Endothelial cell of umbilical vein (primary cell): ENCODE measurements at regions of chr10 and their contacts with region 1.

Region 1: GRCh38 chr10:110304780-110305421 is at the start of gene SMNDC1:
- DNase-seq: peak; percentile 99
- H3K4me3 ChIP-seq: peak within 1 kb of the TSS; percentile 95 to 99 (median 99)
- H3K27ac ChIP-seq: peak within 1 kb of the TSS; percentile 97
- H3K4me1 ChIP-seq: peaks cover 47% of the 10 kb centered on the region
- H3K27me3 ChIP-seq: no peaks in the 10 kb centered on the region
- CTCF ChIP-seq: no peak
- POLR2A ChIP-seq: peak; percentile 51
- total RNA-seq, gene SMNDC1: 38.5 and 39.3 TPM in 2 replicates

Region 2: DNA sequence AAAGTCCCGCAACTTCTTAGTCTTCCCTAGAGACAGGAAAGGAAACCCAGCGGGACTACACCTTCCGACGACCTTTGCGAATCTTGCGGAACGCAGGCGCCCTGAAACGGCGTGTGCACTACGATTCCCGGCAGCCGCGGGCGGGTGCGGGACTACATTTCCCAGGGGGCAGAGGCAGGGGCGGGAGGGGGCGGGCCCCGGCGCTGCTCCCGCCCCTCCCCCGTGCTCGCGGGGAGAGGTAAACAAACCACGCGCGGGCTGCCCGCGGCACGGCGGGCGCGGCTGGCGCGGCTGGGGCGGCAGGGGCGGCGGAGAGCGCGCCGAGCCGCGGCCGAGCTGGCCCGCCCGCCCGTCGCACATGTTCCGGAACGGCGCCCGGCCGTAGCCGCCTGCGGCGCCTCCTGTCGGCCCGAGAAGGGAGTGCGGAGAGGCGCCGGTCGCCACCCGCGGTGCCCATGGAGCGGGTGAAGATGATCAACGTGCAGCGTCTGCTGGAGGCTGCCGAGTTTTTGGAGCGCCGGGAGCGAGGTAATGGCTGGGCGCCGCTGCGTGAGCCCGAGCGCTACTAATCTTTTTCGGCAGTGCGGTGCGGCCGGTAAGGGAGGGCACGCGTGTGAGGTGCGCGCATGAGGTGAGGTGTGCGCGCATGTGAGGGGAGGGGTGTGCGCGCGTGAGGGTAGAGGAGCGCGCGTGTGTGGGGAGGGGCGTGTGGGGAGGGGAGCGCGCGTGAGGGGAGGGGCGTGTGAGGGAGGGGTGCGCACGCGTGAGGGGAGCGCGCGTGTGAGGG is 79.0 kb before region 1 on chr10:
- CTCF ChIA-PET with region 1: no interaction called
- POLR2A ChIA-PET with region 1: no interaction called
- dilution Hi-C with region 1: no loop called
- intact Hi-C with region 1: no loop called
- DNase-seq: peak; percentile 89
- H3K4me3 ChIP-seq: peak overlapping the region; percentile 74 to 92 (median 75)
- H3K27ac ChIP-seq: no peak overlapping the region
- H3K4me1 ChIP-seq: peaks cover 8% of the 10 kb centered on the region
- H3K27me3 ChIP-seq: no peaks in the 10 kb centered on the region
- CTCF ChIP-seq: peak; percentile 54 to 79
- POLR2A ChIP-seq: no peak

Region 3: DNA sequence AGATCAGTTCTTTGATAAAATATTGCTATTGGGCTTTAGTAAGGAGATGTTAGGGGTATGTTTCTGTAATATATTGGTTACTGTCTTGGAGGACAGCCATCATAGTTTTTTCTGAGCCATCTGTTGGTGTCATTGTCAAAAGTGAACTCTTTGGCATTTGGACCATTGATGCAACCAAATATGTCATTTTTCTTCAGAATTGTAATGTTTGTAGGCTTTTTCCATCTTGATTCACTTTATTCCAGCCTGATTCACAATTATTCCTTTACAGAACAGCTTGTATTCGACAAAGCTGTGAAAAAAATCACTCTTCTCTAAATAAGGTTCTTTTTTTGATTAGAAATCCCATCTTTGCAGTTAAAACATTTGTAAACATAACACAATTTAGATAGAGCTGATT is 37.6 kb before region 1 on chr10:
- CTCF ChIA-PET with region 1: no interaction called
- POLR2A ChIA-PET with region 1: no interaction called
- dilution Hi-C with region 1: no loop called
- intact Hi-C with region 1: no loop called
- DNase-seq: no peak
- H3K4me3 ChIP-seq: no peak overlapping the region
- H3K27ac ChIP-seq: no peak overlapping the region
- H3K4me1 ChIP-seq: no peaks in the 10 kb centered on the region
- H3K27me3 ChIP-seq: no peaks in the 10 kb centered on the region
- CTCF ChIP-seq: no peak
- POLR2A ChIP-seq: no peak

Region 4: GRCh38 chr10:110535958-110536891 is 231.3 kb after region 1 on chr10:
- CTCF ChIA-PET with region 1: interaction called, 3 read pairs
- POLR2A ChIA-PET with region 1: no interaction called
- dilution Hi-C with region 1: no loop called
- intact Hi-C with region 1: loop called (anchors 1 kb)
- DNase-seq: peak; percentile 44
- H3K4me3 ChIP-seq: no peak overlapping the region
- H3K27ac ChIP-seq: no peak overlapping the region
- H3K4me1 ChIP-seq: peaks cover 15% of the 10 kb centered on the region
- H3K27me3 ChIP-seq: no peaks in the 10 kb centered on the region
- CTCF ChIP-seq: peak; percentile 8 to 27
- POLR2A ChIP-seq: no peak

Region 5: GRCh38 chr10:110567201-110568054 is 262.5 kb after region 1 on chr10 and contains the start of gene SMC3:
- CTCF ChIA-PET with region 1: interaction called, 6 read pairs
- POLR2A ChIA-PET with region 1: interaction called, 10 read pairs
- dilution Hi-C with region 1: no loop called
- intact Hi-C with region 1: loop called (anchors 1 kb)
- DNase-seq: peak; percentile 96
- H3K4me3 ChIP-seq: peak within 1 kb of the TSS; percentile 65 to 95 (median 90)
- H3K27ac ChIP-seq: peak within 1 kb of the TSS; percentile 96
- H3K4me1 ChIP-seq: peaks cover 14% of the 10 kb centered on the region
- H3K27me3 ChIP-seq: peaks cover 0 to 1% of the 10 kb centered on the region in 2 experiments
- CTCF ChIP-seq: no peak
- POLR2A ChIP-seq: peak; percentile 61
- total RNA-seq, gene SMC3: 44.2 and 45.0 TPM in 2 replicates

Region 6: DNA sequence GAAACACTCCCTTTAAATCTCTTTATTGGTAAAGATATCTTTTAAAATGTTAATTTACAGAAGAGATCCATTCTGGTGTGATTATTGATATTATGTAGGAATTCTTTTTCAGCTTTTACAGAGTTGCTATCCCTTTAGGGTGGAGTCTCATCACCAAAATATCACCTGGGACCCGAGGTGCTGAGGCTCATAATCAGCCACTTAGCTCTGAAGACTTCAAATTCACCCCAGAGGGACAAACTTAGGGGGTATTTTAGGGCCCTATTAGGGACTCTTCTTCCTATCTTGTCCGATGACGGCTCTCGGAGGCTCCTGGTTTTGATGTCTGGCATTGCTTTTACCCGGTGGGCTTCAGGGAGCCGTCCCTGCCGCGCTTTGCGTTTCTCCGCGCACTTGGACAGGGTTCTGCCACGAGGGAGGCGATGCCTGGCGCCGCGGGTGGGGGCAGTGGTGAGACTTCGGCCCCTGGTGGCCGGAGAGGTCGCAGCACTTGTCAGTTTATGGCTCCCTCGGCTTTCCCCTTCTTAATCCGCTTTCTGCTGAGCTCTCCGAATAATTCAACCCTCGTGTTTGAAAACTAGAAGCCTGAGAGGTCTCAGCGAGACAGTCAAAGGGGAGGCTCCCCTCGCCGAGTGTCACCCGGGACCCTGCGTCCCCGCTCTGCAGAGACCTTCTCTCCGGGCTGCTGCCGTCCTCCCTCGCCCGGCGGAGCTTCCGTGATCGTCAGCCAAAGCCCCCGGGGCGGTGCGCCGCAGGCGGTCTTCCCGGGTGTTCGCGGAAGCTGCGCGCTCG is 367.1 kb after region 1 on chr10:
- CTCF ChIA-PET with region 1: interaction called, 8 read pairs
- POLR2A ChIA-PET with region 1: no interaction called
- dilution Hi-C with region 1: no loop called
- intact Hi-C with region 1: loop called (anchors 2 kb)
- DNase-seq: peak; percentile 73
- H3K4me3 ChIP-seq: peak overlapping the region; percentile 25 to 62 (median 52)
- H3K27ac ChIP-seq: no peak overlapping the region
- H3K4me1 ChIP-seq: peaks cover 4% of the 10 kb centered on the region
- H3K27me3 ChIP-seq: peaks cover 37 to 44% of the 10 kb centered on the region in 2 experiments
- CTCF ChIP-seq: peak; percentile 90 to 99
- POLR2A ChIP-seq: no peak

Region 7: GRCh38 chr10:110893559-110894179 is 588.8 kb after region 1 on chr10:
- CTCF ChIA-PET with region 1: interaction called, 5 read pairs
- POLR2A ChIA-PET with region 1: interaction called, 7 read pairs
- dilution Hi-C with region 1: no loop called
- intact Hi-C with region 1: loop called (anchors 5 kb)
- DNase-seq: peak; percentile 62
- H3K4me3 ChIP-seq: no peak overlapping the region
- H3K27ac ChIP-seq: no peak overlapping the region
- H3K4me1 ChIP-seq: no peaks in the 10 kb centered on the region
- H3K27me3 ChIP-seq: no peaks in the 10 kb centered on the region
- CTCF ChIP-seq: peak; percentile 17 to 29
- POLR2A ChIP-seq: no peak

Region 8: GRCh38 chr10:111076191-111076681 is 771.3 kb after region 1 on chr10:
- CTCF ChIA-PET with region 1: no interaction called
- POLR2A ChIA-PET with region 1: no interaction called
- dilution Hi-C with region 1: no loop called
- intact Hi-C with region 1: loop called (anchors 5 kb)
- DNase-seq: peak; percentile 41
- H3K4me3 ChIP-seq: peak overlapping the region; percentile 23 to 50 (median 29)
- H3K27ac ChIP-seq: no peak overlapping the region
- H3K4me1 ChIP-seq: peaks cover 17% of the 10 kb centered on the region
- H3K27me3 ChIP-seq: peaks cover 40 to 71% of the 10 kb centered on the region in 2 experiments
- CTCF ChIP-seq: peak; percentile 68 to 92
- POLR2A ChIP-seq: no peak